Caco-2 (cell line): ENCODE measurements at regions of chr11 and their contacts with region 1.

Region 1: DNA sequence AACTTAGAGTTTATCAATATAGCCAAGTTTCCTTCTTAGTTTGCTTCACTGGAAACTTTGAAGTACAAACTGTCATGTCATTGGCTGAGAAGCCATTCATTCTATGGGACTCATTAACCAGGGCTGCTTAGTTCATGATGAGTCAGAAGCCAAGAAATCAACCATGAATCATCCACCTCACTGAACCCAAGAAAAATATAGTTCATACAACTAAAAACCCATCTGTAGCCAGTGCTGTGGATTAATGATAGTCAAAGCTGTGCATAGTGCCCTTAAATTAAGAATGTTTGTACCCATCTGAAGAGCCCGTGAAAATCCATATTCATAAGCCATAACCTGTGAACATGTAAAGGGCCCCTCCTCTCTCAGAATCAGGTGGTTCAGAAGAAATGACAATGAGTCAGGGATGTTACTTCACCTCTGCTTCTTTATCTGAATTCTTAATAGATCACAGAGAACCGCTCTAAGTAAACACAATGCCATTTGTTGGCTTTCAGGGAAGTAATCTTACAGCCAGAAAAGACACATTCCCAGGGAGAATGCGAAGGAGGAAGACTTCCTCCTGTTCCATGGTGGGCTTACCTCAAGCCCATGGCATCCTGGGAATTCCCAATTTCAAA is 25.4 kb downstream of the MMP20 start:
- DNase-seq: peak; percentile 72 to 81
- H3K4me3 ChIP-seq: no peak overlapping the region
- H3K4me3 Mint-ChIP-seq: peak overlapping the region; percentile 61
- H3K27ac Mint-ChIP-seq: peak overlapping the region; percentile 79
- H3K4me1 ChIP-seq: peaks cover 73% of the 10 kb centered on the region
- H3K4me1 Mint-ChIP-seq: peaks cover 63% of the 10 kb centered on the region
- H3K27me3 ChIP-seq: no peaks in the 10 kb centered on the region
- H3K27me3 Mint-ChIP-seq: no peaks in the 10 kb centered on the region
- CTCF ChIP-seq: no peak

Region 2: GRCh38 chr11:102553835-102554282 is 45.9 kb before region 1 on chr11:
- CTCF ChIA-PET with region 1: no interaction called
- POLR2A ChIA-PET with region 1: no interaction called
- intact Hi-C with region 1: loop called (anchors 2 kb)
- DNase-seq: no peak
- H3K4me3 ChIP-seq: no peak overlapping the region
- H3K4me3 Mint-ChIP-seq: no peak overlapping the region
- H3K27ac Mint-ChIP-seq: peak overlapping the region; percentile 87
- H3K4me1 ChIP-seq: peaks cover 36% of the 10 kb centered on the region
- H3K4me1 Mint-ChIP-seq: peaks cover 30% of the 10 kb centered on the region
- H3K27me3 ChIP-seq: no peaks in the 10 kb centered on the region
- H3K27me3 Mint-ChIP-seq: no peaks in the 10 kb centered on the region
- CTCF ChIP-seq: no peak

Region 3: DNA sequence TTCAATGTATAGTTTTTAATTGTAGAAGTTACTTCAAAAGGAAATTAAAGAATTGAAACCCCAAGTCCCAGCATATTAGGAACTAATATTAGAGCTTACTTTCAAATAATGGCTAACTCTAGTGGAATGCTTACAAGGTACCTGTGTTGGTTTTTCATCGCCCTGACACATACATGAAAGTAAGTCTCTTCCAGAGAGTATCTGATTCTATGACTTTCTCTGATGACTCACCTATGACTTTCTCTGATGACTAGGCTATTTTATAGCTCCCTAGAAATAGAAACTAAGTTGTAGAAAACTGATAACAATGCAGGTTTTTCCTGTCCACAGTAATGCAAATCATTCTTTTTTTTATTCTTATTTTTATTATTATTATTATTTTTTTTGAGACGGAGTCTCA is 35.6 kb before region 1 on chr11:
- CTCF ChIA-PET with region 1: no interaction called
- POLR2A ChIA-PET with region 1: no interaction called
- intact Hi-C with region 1: loop called (anchors 2 kb)
- DNase-seq: no peak
- H3K4me3 ChIP-seq: no peak overlapping the region
- H3K4me3 Mint-ChIP-seq: no peak overlapping the region
- H3K27ac Mint-ChIP-seq: peak overlapping the region; percentile 10
- H3K4me1 ChIP-seq: peaks cover 26% of the 10 kb centered on the region
- H3K4me1 Mint-ChIP-seq: no peaks in the 10 kb centered on the region
- H3K27me3 ChIP-seq: no peaks in the 10 kb centered on the region
- H3K27me3 Mint-ChIP-seq: no peaks in the 10 kb centered on the region
- CTCF ChIP-seq: no peak

Region 4: GRCh38 chr11:102589047-102589459 is 10.7 kb before region 1 on chr11:
- CTCF ChIA-PET with region 1: no interaction called
- POLR2A ChIA-PET with region 1: no interaction called
- intact Hi-C with region 1: no loop called
- DNase-seq: no peak
- H3K4me3 ChIP-seq: no peak overlapping the region
- H3K4me3 Mint-ChIP-seq: no peak overlapping the region
- H3K27ac Mint-ChIP-seq: no peak overlapping the region
- H3K4me1 ChIP-seq: 0 out of 2 replicates have a peak, but pooled peaks cover 4% of the 10 kb centered on the region
- H3K4me1 Mint-ChIP-seq: no peaks in the 10 kb centered on the region
- H3K27me3 ChIP-seq: no peaks in the 10 kb centered on the region
- H3K27me3 Mint-ChIP-seq: no peaks in the 10 kb centered on the region
- CTCF ChIP-seq: no peak

Region 5: GRCh38 chr11:102653744-102654291 is 54.1 kb after region 1 on chr11:
- CTCF ChIA-PET with region 1: no interaction called
- POLR2A ChIA-PET with region 1: no interaction called
- intact Hi-C with region 1: no loop called
- DNase-seq: no peak
- H3K4me3 ChIP-seq: no peak overlapping the region
- H3K4me3 Mint-ChIP-seq: no peak overlapping the region
- H3K27ac Mint-ChIP-seq: no peak overlapping the region
- H3K4me1 ChIP-seq: no peaks in the 10 kb centered on the region
- H3K4me1 Mint-ChIP-seq: no peaks in the 10 kb centered on the region
- H3K27me3 ChIP-seq: no peaks in the 10 kb centered on the region
- H3K27me3 Mint-ChIP-seq: peaks cover 8% of the 10 kb centered on the region
- CTCF ChIP-seq: no peak